Posterior cingulate gyrus (tissue), 11 donors: ENCODE measurements at regions of chr6 and their contacts with region 1.

Region 1: GRCh38 chr6:41683510-41684310 is 45.4 kb downstream of the MDFI start:
- DNase-seq: peak; percentile 71 to 98 (median 86)

Region 2: GRCh38 chr6:40328405-40328987 is 1355.2 kb before region 1 on chr6:
- intact Hi-C with region 1: no loop called
- DNase-seq: peak in 2 of 10 donors; percentile 73 to 87

Region 3: GRCh38 chr6:41367700-41368099 is 316.0 kb before region 1 on chr6:
- intact Hi-C with region 1: loop called (anchors 1 kb)
- DNase-seq: peak; percentile 56 to 96 (median 78)

Region 4: DNA sequence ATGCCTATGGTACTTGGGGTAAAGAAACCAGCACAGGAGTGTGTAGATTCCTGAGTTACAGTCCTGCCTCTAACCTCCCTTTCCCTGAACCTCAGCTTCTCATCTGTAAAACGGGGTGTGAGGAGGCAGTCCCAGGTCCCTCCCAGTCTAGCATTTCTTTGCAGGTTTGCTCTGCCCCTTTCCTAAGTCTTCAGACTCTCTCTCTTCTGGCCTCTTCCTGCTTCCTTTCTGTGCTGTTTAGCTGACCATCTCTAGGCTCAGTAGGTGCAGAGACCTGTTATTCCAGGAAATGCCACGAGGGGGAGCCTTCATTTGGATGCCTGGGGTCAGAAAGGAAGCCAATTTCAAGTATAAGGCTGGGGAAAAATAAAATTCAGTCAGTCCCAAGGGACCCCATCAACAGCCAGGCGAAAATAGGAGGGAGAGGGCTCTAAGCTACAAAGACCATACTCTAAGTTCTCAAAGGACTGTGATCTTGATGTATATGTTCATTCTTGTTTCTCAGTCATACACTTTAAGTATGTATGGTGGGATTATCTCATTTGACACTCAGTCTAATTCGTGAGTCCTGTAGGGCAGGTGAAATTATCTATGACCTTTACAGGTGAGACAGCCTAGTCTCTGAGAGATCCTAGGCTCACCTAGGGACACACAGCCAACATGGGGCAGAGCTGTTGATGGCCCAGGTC is 259.2 kb before region 1 on chr6:
- intact Hi-C with region 1: loop called (anchors 5 kb)
- DNase-seq: peak; percentile 61 to 96 (median 88)

Region 5: DNA sequence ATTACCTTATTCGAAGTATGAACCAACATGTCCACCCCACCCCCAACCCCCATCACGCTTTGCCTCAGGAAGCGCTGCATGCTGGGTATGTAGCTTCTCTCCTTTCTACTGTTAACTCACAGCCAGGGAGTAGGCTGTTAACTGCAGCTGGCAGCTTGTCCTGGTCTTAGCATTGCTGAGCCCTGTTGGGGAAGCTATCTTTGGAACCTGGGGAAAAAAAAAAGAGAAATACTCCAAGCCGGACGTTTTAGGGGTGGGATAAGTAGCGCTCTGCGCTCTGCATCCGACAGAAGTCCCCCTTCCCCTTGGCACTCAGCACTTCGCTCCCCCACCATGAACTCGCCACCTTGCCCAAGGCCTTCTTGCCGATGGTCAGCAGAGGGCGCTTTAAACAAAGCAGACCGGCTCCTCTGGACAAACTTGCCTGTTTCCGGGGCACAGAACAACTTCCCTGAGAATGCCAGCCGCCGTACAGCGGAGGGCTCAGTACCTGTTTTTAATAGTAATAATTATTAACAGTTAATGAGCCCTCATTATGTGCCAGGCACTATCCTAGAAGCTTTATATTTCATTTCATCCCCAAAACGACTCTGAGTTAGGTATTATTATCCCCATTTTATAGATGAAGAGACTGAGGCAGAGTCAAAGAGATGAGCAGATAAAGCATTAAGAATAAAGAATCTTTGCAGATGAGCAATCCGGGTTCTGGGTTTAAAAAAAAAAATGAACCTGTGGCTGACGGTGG is 80.7 kb before region 1 on chr6:
- intact Hi-C with region 1: loop called (anchors 1 kb)
- DNase-seq: peak; percentile 62 to 96 (median 84)

Region 6: DNA sequence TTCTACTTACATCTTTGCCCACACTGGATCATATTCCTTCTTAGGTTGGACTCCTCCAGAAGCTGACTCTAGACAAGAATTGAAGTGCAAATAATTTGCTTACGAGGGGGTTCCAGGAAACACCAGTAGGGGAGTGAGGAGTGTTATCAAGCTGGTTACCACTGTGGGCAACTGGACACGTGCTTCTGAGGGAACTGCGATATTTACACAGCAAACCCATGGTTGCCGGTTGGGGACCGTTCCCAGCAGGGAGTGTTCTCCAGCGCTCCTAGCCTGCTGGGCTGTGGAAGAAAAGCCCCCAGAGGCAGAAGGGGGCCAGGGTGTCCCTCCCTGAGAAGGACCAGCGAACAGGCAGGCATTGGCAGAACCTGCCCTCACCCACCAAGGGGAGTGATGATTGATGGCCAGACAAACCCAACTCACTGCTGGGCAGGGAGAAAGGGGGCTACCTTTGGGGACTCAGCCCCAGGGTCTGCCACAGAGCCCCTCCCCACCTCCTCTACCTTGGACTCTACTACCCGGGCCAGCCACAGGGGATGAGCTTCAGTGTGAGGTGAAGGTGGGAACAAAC is 23.7 kb before region 1 on chr6:
- intact Hi-C with region 1: no loop called
- DNase-seq: peak in 3 of 10 donors; percentile 15 to 49 (median 49)

Region 7: GRCh38 chr6:41735427-41736356 is 52.0 kb after region 1 on chr6 and contains the start of gene TFEB:
- intact Hi-C with region 1: loop called (anchors 2 kb)
- DNase-seq: peak; percentile 95 to 99 (median 96)